ENCODE measurements at regions of chr7 and their contacts with region 1.

Region 1: GRCh38 chr7:101953248-101953819 is 135.9 kb downstream of the CUX1 start:
- DNase-seq: peak; percentile 76 to 86
- ATAC-seq: peak; percentile 85 to 91
- H3K4me3 ChIP-seq: no peak overlapping the region
- H3K27ac ChIP-seq: peak overlapping the region; percentile 89 to 96 (median 94)
- H3K4me1 ChIP-seq: peaks cover 72 to 73% of the 10 kb centered on the region in 2 donors
- H3K27me3 ChIP-seq: no peaks in the 10 kb centered on the region
- CTCF ChIP-seq: peak in 3 of 5 experiments; percentile 6 to 20 (median 13)
- POLR2A ChIP-seq: peak; percentile 63 to 82

Region 2: GRCh38 chr7:101862280-101863220 is 90.8 kb before region 1 on chr7:
- in situ Hi-C with region 1: loop called in 1 of 4 experiments (anchors 10 kb)
- intact Hi-C with region 1: loop called (anchors 5 kb)
- DNase-seq: peak; percentile 76 to 88
- ATAC-seq: peak; percentile 79 to 85
- H3K4me3 ChIP-seq: peak overlapping the region in 3 of 4 donors; percentile 3 to 12 (median 9)
- H3K27ac ChIP-seq: peak overlapping the region; percentile 84 to 93 (median 91)
- H3K4me1 ChIP-seq: peaks cover 88 to 92% of the 10 kb centered on the region in 2 donors
- H3K27me3 ChIP-seq: no peaks in the 10 kb centered on the region
- CTCF ChIP-seq: no peak
- POLR2A ChIP-seq: peak; percentile 76 to 88

Region 3: GRCh38 chr7:101911800-101912715 is 41.3 kb before region 1 on chr7:
- in situ Hi-C with region 1: no loop called
- intact Hi-C with region 1: loop called (anchors 2 kb)
- DNase-seq: peak; percentile 95 to 96
- ATAC-seq: peak; percentile 89 to 90
- H3K4me3 ChIP-seq: peak overlapping the region in 1 of 4 donors; percentile 20
- H3K27ac ChIP-seq: peak overlapping the region; percentile 92 to 97 (median 93)
- H3K4me1 ChIP-seq: peaks cover 45 to 46% of the 10 kb centered on the region in 2 donors
- H3K27me3 ChIP-seq: no peaks in the 10 kb centered on the region
- CTCF ChIP-seq: peak in 3 of 5 experiments; percentile 19 to 24 (median 23)
- POLR2A ChIP-seq: peak in 1 of 2 donors; percentile 44

Region 4: DNA sequence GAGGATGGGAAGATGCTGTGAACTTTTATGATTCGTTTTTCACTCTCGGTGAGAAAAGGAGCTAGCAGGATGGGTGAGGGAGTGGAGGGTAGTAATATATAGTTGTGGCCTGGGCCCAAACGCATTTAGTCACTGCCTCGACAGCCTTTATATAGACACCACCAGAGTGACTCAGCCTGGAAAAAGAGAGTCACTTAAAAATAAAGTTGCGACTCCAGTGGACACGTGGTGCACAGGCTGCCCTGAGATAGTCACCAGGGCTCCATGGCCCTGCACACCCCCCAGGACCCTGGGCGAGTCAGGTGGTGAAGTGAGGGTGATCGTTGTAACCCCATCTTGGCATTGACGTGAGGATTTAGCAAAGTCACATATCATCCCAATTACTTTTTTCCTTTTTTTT is 29.2 kb before region 1 on chr7:
- in situ Hi-C with region 1: no loop called
- intact Hi-C with region 1: no loop called
- DNase-seq: peak; percentile 72 to 83
- ATAC-seq: peak; percentile 95 to 97
- H3K4me3 ChIP-seq: peak overlapping the region in 1 of 4 donors; percentile 25
- H3K27ac ChIP-seq: peak overlapping the region; percentile 81 to 94 (median 88)
- H3K4me1 ChIP-seq: peaks cover 30 to 39% of the 10 kb centered on the region in 2 donors
- H3K27me3 ChIP-seq: no peaks in the 10 kb centered on the region
- CTCF ChIP-seq: no peak
- POLR2A ChIP-seq: peak; percentile 82 to 86